Natural killer cell (primary cell): ENCODE measurements at regions of chr12 and their contacts with region 1.

Region 1: GRCh38 chr12:57590536-57591479 is at the start of gene PIP4K2C:
- DNase-seq: peak; percentile 68 to 92
- ATAC-seq: peak; percentile 93 to 96 (median 93)
- H3K4me3 ChIP-seq: peak within 1 kb of the TSS; percentile 86
- H3K4me3 Mint-ChIP-seq: peak within 1 kb of the TSS; percentile 92
- H3K27ac ChIP-seq: peak within 1 kb of the TSS; percentile 72
- H3K27ac Mint-ChIP-seq: peak within 1 kb of the TSS; percentile 81 to 92
- H3K4me1 ChIP-seq: peaks cover 23% of the 10 kb centered on the region
- H3K4me1 Mint-ChIP-seq: peaks cover 36 to 39% of the 10 kb centered on the region in 2 donors
- H3K27me3 ChIP-seq: peaks cover 3% of the 10 kb centered on the region
- H3K27me3 Mint-ChIP-seq: peaks cover 0 to 3% of the 10 kb centered on the region in 2 donors
- CTCF ChIP-seq: no peak
- total RNA-seq, gene PIP4K2C: 41.0 to 62.9 (median 52.0) TPM

Region 2: GRCh38 chr12:57604454-57604991 is 13.7 kb after region 1 on chr12 and contains the start of gene DTX3:
- intact Hi-C with region 1: loop called (anchors 2 kb)
- DNase-seq: peak in 1 of 2 donors; percentile 67
- ATAC-seq: peak; percentile 43 to 66 (median 61)
- H3K4me3 ChIP-seq: peak within 1 kb of the TSS; percentile 57
- H3K4me3 Mint-ChIP-seq: peak within 1 kb of the TSS; percentile 86
- H3K27ac ChIP-seq: peak within 1 kb of the TSS; percentile 72
- H3K27ac Mint-ChIP-seq: peak within 1 kb of the TSS; percentile 92 to 93
- H3K4me1 ChIP-seq: peaks cover 29% of the 10 kb centered on the region
- H3K4me1 Mint-ChIP-seq: peaks cover 34 to 53% of the 10 kb centered on the region in 2 donors
- H3K27me3 ChIP-seq: no peaks in the 10 kb centered on the region
- H3K27me3 Mint-ChIP-seq: no peaks in the 10 kb centered on the region
- CTCF ChIP-seq: no peak
- total RNA-seq, gene DTX3: 65.1 to 81.1 (median 77.0) TPM

Region 3: GRCh38 chr12:57693659-57694458 is 103.1 kb after region 1 on chr12 and contains the start of gene OS9:
- intact Hi-C with region 1: no loop called
- DNase-seq: peak; percentile 88 to 100
- ATAC-seq: peak; percentile 91 to 98 (median 92)
- H3K4me3 ChIP-seq: peak within 1 kb of the TSS; percentile 82
- H3K4me3 Mint-ChIP-seq: no peak within 1 kb of the TSS
- H3K27ac ChIP-seq: peak within 1 kb of the TSS; percentile 57
- H3K27ac Mint-ChIP-seq: no peak within 1 kb of the TSS
- H3K4me1 ChIP-seq: peaks cover 14% of the 10 kb centered on the region
- H3K4me1 Mint-ChIP-seq: peaks cover 2 to 8% of the 10 kb centered on the region in 2 donors
- H3K27me3 ChIP-seq: no peaks in the 10 kb centered on the region
- H3K27me3 Mint-ChIP-seq: peaks cover 3 to 15% of the 10 kb centered on the region in 2 donors
- CTCF ChIP-seq: peak; percentile 85
- total RNA-seq, gene OS9: 185 to 221 (median 198) TPM

Region 4: DNA sequence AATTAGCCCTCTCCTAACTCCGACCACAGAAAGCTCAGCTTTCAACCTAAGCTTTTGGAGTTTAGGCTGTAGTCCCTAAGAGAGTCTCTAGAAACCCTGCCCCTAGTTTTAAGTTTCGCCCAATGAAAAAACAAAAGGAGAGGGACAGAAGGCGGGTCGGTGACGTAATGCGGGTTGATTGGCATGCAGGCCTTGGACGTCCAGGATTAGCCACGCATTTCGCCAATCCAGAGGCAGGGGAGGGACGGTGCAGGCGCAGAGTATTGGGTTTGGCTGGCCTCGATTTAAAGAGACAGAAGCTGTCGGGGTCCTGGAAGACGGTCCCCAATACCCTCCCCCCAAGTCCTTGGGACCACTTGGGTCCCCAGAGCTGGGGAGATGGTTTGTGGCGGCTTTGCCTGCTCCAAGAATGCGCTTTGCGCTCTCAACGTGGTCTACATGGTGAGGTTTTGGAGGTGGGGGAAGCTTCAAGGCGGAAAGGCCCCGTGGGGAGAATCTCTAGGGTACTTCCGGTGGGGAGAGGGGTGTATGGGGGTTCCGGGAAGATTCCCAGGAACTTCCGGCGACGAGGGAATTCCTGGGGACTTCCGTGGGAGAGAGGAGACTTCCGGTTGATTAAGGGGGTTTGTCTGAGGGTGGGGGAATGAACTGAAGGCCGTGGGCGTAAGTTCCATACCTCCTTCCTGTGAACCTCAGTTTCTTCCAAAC is 154.1 kb after region 1 on chr12 and contains the start of gene TSPAN31:
- intact Hi-C with region 1: loop called (anchors 5 kb)
- DNase-seq: peak; percentile 91 to 99
- ATAC-seq: peak; percentile 79 to 90 (median 84)
- H3K4me3 ChIP-seq: peak within 1 kb of the TSS; percentile 81
- H3K4me3 Mint-ChIP-seq: peak within 1 kb of the TSS; percentile 98
- H3K27ac ChIP-seq: peak within 1 kb of the TSS; percentile 91
- H3K27ac Mint-ChIP-seq: peak within 1 kb of the TSS; percentile 98 to 99
- H3K4me1 ChIP-seq: peaks cover 44% of the 10 kb centered on the region
- H3K4me1 Mint-ChIP-seq: peaks cover 47 to 49% of the 10 kb centered on the region in 2 donors
- H3K27me3 ChIP-seq: no peaks in the 10 kb centered on the region
- H3K27me3 Mint-ChIP-seq: no peaks in the 10 kb centered on the region
- CTCF ChIP-seq: no peak
- total RNA-seq, gene TSPAN31: 18.3 to 27.0 (median 23.5) TPM